ENCODE measurements at regions of chr17 and their contacts with region 1.

Region 1: DNA sequence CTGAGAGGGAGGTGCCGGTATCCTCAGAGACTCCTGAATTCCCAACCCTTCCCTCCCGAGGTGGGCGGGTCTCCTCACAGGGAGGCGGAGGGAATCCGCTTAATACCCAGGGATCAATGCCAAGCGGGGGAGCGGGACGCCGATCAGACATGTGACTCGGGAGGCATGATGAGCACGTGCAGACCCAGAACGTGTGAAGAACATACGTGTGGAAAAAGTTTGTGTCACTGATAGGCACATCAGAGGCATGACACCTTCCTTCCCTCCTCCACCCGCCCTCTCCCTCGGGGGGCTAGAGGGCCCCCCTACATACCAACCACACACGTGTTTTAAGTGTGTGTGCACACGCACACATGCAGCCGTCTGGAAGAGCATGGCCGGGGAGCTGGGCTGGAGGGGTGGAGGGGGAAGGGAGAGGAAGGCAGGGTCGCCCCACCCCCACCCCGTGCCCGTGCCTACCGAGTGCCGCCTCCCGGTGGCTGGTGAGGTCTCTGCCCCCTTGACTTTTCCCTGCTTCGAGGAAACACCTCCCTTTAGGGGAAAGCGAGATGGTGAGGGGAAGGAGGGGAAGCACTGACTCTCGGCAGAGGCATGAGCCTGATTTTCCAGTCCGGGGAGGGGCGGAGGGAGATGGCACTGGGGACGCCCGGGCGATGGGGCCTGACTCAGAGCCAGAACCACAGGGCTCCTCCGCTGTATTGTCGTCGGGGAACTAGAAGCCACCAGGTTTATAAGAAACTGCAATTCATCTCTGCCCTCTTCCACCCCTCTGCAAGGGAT is 12.1 kb upstream of the TBX21 start:
- DNase-seq: peak; percentile 99
- ATAC-seq: peak; percentile 71
- H3K4me3 Mint-ChIP-seq: peak overlapping the region; percentile 69
- H3K27ac Mint-ChIP-seq: peak overlapping the region; percentile 98
- H3K4me1 Mint-ChIP-seq: peaks cover 97% of the 10 kb centered on the region
- H3K27me3 Mint-ChIP-seq: no peaks in the 10 kb centered on the region

Region 2: GRCh38 chr17:47315451-47316266 is 405.3 kb before region 1 on chr17:
- CTCF ChIA-PET with region 1: no interaction called
- POLR2A ChIA-PET with region 1: no interaction called
- intact Hi-C with region 1: no loop called
- DNase-seq: no peak
- ATAC-seq: peak; percentile 65
- H3K4me3 Mint-ChIP-seq: no peak overlapping the region
- H3K27ac Mint-ChIP-seq: no peak overlapping the region
- H3K4me1 Mint-ChIP-seq: peaks cover 2% of the 10 kb centered on the region
- H3K27me3 Mint-ChIP-seq: no peaks in the 10 kb centered on the region

Region 3: DNA sequence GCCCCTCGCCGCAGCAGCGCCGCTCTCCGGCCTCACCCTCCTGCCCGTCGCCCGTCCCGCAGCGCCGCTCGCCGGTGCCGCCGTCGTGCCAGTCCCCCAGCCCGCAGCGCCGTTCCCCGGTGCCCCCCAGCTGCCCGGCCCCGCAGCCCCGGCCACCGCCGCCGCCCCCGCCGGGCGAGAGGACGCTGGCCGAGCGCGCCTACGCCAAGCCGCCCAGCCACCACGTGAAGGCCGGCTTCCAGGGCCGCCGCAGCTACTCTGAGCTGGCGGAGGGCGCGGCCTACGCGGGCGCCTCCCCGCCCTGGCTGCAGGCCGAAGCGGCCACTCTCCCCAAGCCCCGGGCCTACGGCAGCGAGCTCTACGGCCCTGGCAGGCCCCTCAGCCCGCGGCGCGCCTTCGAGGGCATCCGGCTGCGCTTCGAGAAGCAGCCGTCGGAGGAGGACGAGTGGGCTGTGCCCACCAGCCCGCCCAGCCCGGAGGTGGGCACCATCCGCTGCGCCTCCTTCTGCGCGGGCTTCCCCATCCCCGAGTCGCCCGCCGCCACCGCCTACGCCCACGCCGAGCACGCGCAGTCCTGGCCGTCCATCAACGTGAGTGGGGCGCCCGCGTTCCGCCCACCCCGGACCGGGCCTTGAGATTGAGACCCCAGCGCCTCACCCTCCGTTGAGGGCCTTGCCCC is 11.9 kb before region 1 on chr17:
- CTCF ChIA-PET with region 1: interaction called, 45 read pairs
- POLR2A ChIA-PET with region 1: interaction called, 29 read pairs
- intact Hi-C with region 1: loop called (anchors 1 kb)
- DNase-seq: no peak
- ATAC-seq: no peak
- H3K4me3 Mint-ChIP-seq: no peak overlapping the region
- H3K27ac Mint-ChIP-seq: no peak overlapping the region
- H3K4me1 Mint-ChIP-seq: peaks cover 62% of the 10 kb centered on the region
- H3K27me3 Mint-ChIP-seq: no peaks in the 10 kb centered on the region

Region 4: DNA sequence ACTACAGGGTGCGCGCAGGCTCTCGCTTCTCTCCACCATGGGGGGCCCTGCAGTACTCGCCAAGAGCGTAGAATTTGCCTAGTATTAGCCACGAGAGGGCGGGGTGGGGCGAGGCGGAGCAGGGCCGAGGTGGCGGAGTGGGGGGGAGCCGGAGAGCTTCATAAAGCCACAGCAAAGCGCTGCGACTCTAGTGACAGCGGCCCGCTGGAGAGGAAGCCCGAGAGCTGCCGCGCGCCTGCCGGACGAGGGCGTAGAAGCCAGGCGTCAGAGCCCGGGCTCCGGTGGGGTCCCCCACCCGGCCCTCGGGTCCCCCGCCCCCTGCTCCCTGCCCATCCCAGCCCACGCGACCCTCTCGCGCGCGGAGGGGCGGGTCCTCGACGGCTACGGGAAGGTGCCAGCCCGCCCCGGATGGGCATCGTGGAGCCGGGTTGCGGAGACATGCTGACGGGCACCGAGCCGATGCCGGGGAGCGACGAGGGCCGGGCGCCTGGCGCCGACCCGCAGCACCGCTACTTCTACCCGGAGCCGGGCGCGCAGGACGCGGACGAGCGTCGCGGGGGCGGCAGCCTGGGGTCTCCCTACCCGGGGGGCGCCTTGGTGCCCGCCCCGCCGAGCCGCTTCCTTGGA is 12.2 kb after region 1 on chr17 and contains the start of gene TBX21:
- CTCF ChIA-PET with region 1: interaction called, 36 read pairs
- POLR2A ChIA-PET with region 1: interaction called, 7 read pairs
- intact Hi-C with region 1: loop called (anchors 1 kb)
- DNase-seq: peak; percentile 96
- ATAC-seq: peak; percentile 80
- H3K4me3 Mint-ChIP-seq: peak within 1 kb of the TSS; percentile 93
- H3K27ac Mint-ChIP-seq: peak within 1 kb of the TSS; percentile 98
- H3K4me1 Mint-ChIP-seq: peaks cover 63% of the 10 kb centered on the region
- H3K27me3 Mint-ChIP-seq: no peaks in the 10 kb centered on the region
- total RNA-seq, gene TBX21: 73.4 to 76.8 TPM

Region 5: GRCh38 chr17:47802341-47803022 is 81.5 kb after region 1 on chr17:
- CTCF ChIA-PET with region 1: no interaction called
- POLR2A ChIA-PET with region 1: no interaction called
- intact Hi-C with region 1: no loop called
- DNase-seq: peak; percentile 81
- ATAC-seq: peak; percentile 98
- H3K4me3 Mint-ChIP-seq: no peak overlapping the region
- H3K27ac Mint-ChIP-seq: no peak overlapping the region
- H3K4me1 Mint-ChIP-seq: no peaks in the 10 kb centered on the region
- H3K27me3 Mint-ChIP-seq: peaks cover 2% of the 10 kb centered on the region

Region 6: DNA sequence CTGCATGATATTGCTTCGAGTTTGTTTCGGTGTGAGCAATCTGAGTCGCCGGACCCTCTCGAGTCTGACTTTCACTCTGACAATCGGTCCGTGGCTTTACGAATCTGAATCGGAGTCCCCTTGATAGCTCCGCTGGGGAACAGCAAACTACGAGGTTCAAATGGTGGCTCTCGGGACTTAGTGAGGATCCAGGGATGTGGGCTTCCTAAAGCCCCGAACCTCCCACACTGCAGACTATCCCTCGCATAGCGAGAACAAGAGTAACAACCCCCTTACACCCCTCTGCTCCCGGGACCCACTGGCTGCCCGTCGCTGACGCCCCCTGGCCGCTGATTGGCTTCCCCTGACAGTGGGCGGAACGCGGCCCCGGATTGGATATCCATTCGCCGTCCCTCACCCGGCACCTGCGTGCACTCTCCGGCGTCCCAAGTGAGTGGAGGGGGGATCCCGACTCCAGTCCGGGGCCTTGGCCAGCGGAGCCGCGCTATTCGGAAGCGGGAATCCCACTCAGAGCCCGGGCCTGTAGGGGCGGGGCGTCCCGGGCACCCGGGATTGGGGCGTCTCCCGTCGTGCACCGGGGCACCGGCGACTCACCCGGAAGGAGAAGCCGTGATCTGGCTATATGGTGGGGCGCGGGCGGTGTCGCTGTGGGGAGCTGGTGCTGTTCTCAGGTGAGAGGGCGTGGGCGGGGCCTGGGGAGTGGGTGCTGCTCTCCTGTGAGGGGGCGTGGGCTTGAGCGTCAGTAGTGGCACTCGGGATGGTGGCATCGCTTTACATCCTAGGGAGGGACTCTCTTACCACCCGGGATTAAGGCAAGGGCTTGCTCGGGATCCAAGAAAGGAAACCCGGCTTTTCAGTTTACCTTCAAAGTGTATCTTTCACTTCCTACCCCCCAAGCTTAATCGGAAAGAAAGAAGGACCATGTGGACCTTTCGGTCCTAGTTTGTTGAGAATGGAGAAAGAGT is 386.5 kb after region 1 on chr17 and contains the start of gene SNX11:
- CTCF ChIA-PET with region 1: no interaction called
- POLR2A ChIA-PET with region 1: no interaction called
- intact Hi-C with region 1: loop called in 1 of 2 experiments (anchors 10 kb)
- DNase-seq: peak; percentile 97
- ATAC-seq: peak; percentile 87
- H3K4me3 Mint-ChIP-seq: peak within 1 kb of the TSS; percentile 97
- H3K27ac Mint-ChIP-seq: peak within 1 kb of the TSS; percentile 98
- H3K4me1 Mint-ChIP-seq: peaks cover 61% of the 10 kb centered on the region
- H3K27me3 Mint-ChIP-seq: no peaks in the 10 kb centered on the region
- total RNA-seq, gene SNX11: 18.0 to 21.4 TPM